GM18951 (cell line): ENCODE measurements at regions of chr11 and their contacts with region 1.

Region 1: GRCh38 chr11:125750629-125751028 is 4.5 kb downstream of the PATE1 start:
- POLR2A ChIP-seq: no peak

Region 2: GRCh38 chr11:126011265-126011664 is 260.6 kb after region 1 on chr11:
- in situ Hi-C with region 1: loop called (anchors 10 kb)
- POLR2A ChIP-seq: no peak